CD4-positive, alpha-beta T cell (primary cell): ENCODE measurements at regions of chr2 and their contacts with region 1.

Region 1: GRCh38 chr2:30266051-30266621 is 34.8 kb downstream of the LBH start:
- DNase-seq: peak; percentile 53 to 84 (median 70)
- ATAC-seq: peak; percentile 92
- H3K4me3 ChIP-seq: peak overlapping the region; percentile 36
- H3K4me3 Mint-ChIP-seq: peak overlapping the region; percentile 88
- H3K27ac ChIP-seq: peak overlapping the region; percentile 65 to 91
- H3K27ac Mint-ChIP-seq: peak overlapping the region; percentile 95
- H3K4me1 ChIP-seq: peaks cover 59% of the 10 kb centered on the region
- H3K4me1 Mint-ChIP-seq: peaks cover 87% of the 10 kb centered on the region
- H3K27me3 ChIP-seq: no peaks in the 10 kb centered on the region
- H3K27me3 Mint-ChIP-seq: no peaks in the 10 kb centered on the region
- CTCF ChIP-seq: no peak

Region 2: DNA sequence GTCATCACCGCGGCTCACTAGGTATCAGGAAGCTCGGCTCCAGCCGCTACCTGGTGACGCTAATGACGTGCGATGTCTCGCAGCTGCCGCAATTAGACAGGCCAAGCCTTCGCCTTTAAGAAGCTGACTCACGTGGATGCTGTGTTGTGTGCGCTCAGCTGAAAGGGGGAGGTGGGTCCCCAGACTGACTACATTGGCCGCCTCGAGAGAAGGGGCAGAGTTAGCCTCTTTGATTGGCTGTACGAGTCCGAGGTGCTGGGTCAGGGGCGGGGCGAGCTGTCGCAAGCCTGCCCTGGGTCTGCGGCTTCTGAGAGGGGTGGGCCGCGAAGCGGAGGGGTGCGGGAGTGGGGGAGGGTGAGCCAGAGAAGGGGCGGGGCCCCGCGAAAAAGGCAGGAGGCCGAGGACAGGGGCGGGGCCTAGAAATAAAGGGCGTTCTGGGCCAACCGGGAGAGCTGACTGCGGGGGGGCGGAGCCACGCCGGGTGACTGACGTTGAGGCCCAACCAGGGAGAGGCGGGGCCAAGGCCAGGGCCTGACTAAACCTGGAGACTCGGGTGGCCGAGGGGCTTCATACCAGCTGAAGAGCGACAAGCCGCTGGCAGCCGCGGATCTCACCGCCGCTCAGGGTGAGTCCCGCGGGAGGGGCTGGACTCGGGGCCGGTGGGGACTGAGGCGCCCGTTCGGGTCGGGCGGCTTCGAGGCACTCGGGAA is 119.5 kb before region 1 on chr2 and contains the start of gene YPEL5:
- CTCF ChIA-PET with region 1: interaction called, 6 read pairs
- POLR2A ChIA-PET with region 1: interaction called, 18 read pairs
- intact Hi-C with region 1: no loop called
- DNase-seq: peak; percentile 99 to 100 (median 99)
- ATAC-seq: peak; percentile 82
- H3K4me3 ChIP-seq: peak within 1 kb of the TSS; percentile 71
- H3K4me3 Mint-ChIP-seq: peak within 1 kb of the TSS; percentile 94
- H3K27ac ChIP-seq: peak within 1 kb of the TSS; percentile 97 to 100
- H3K27ac Mint-ChIP-seq: peak within 1 kb of the TSS; percentile 99
- H3K4me1 ChIP-seq: peaks cover 38% of the 10 kb centered on the region
- H3K4me1 Mint-ChIP-seq: peaks cover 68% of the 10 kb centered on the region
- H3K27me3 ChIP-seq: no peaks in the 10 kb centered on the region
- H3K27me3 Mint-ChIP-seq: no peaks in the 10 kb centered on the region
- CTCF ChIP-seq: no peak
- total RNA-seq, gene YPEL5: 932 to 972 TPM

Region 3: GRCh38 chr2:30231212-30231995 is 34.7 kb before region 1 on chr2 and contains the start of gene LBH:
- CTCF ChIA-PET with region 1: interaction called, 10 read pairs
- POLR2A ChIA-PET with region 1: interaction called, 373 read pairs
- intact Hi-C with region 1: loop called (anchors 2 to 5 kb)
- DNase-seq: peak; percentile 86 to 96 (median 90)
- ATAC-seq: peak; percentile 57
- H3K4me3 ChIP-seq: peak within 1 kb of the TSS; percentile 87
- H3K4me3 Mint-ChIP-seq: peak within 1 kb of the TSS; percentile 93
- H3K27ac ChIP-seq: peak within 1 kb of the TSS; percentile 90 to 96
- H3K27ac Mint-ChIP-seq: peak within 1 kb of the TSS; percentile 99
- H3K4me1 ChIP-seq: peaks cover 58% of the 10 kb centered on the region
- H3K4me1 Mint-ChIP-seq: peaks cover 72% of the 10 kb centered on the region
- H3K27me3 ChIP-seq: no peaks in the 10 kb centered on the region
- H3K27me3 Mint-ChIP-seq: no peaks in the 10 kb centered on the region
- CTCF ChIP-seq: no peak
- total RNA-seq, gene LBH: 131 to 135 TPM

Region 4: GRCh38 chr2:30252723-30253701 is 13.1 kb before region 1 on chr2:
- CTCF ChIA-PET with region 1: interaction called, 5 read pairs
- POLR2A ChIA-PET with region 1: interaction called, 34 read pairs
- intact Hi-C with region 1: loop called in 1 of 2 experiments (anchors 1 kb)
- DNase-seq: peak in 7 of 14 experiments; percentile 33 to 63 (median 45)
- ATAC-seq: peak; percentile 37
- H3K4me3 ChIP-seq: no peak overlapping the region
- H3K4me3 Mint-ChIP-seq: peak overlapping the region; percentile 57
- H3K27ac ChIP-seq: peak overlapping the region; percentile 70 to 79
- H3K27ac Mint-ChIP-seq: peak overlapping the region; percentile 99
- H3K4me1 ChIP-seq: peaks cover 98% of the 10 kb centered on the region
- H3K4me1 Mint-ChIP-seq: peaks cover 94% of the 10 kb centered on the region
- H3K27me3 ChIP-seq: no peaks in the 10 kb centered on the region
- H3K27me3 Mint-ChIP-seq: no peaks in the 10 kb centered on the region
- CTCF ChIP-seq: no peak

Region 5: GRCh38 chr2:30315391-30316063 is 49.4 kb after region 1 on chr2:
- CTCF ChIA-PET with region 1: no interaction called
- POLR2A ChIA-PET with region 1: interaction called, 4 read pairs
- intact Hi-C with region 1: loop called in 1 of 2 experiments (anchors 5 kb)
- DNase-seq: peak in 5 of 14 experiments; percentile 27 to 82 (median 53)
- ATAC-seq: peak; percentile 80
- H3K4me3 ChIP-seq: no peak overlapping the region
- H3K4me3 Mint-ChIP-seq: peak overlapping the region; percentile 62
- H3K27ac ChIP-seq: peak overlapping the region; percentile 13 to 51
- H3K27ac Mint-ChIP-seq: peak overlapping the region; percentile 77
- H3K4me1 ChIP-seq: peaks cover 26% of the 10 kb centered on the region
- H3K4me1 Mint-ChIP-seq: peaks cover 56% of the 10 kb centered on the region
- H3K27me3 ChIP-seq: no peaks in the 10 kb centered on the region
- H3K27me3 Mint-ChIP-seq: no peaks in the 10 kb centered on the region
- CTCF ChIP-seq: no peak

Region 6: GRCh38 chr2:30421604-30422443 is 155.7 kb after region 1 on chr2:
- CTCF ChIA-PET with region 1: no interaction called
- POLR2A ChIA-PET with region 1: interaction called, 7 read pairs
- intact Hi-C with region 1: loop called in 1 of 2 experiments (anchors 10 kb)
- DNase-seq: peak in 8 of 14 experiments; percentile 10 to 63 (median 19)
- ATAC-seq: peak; percentile 47
- H3K4me3 ChIP-seq: no peak overlapping the region
- H3K4me3 Mint-ChIP-seq: peak overlapping the region; percentile 43
- H3K27ac ChIP-seq: peak overlapping the region; percentile 48 to 51
- H3K27ac Mint-ChIP-seq: peak overlapping the region; percentile 82
- H3K4me1 ChIP-seq: peaks cover 30% of the 10 kb centered on the region
- H3K4me1 Mint-ChIP-seq: peaks cover 42% of the 10 kb centered on the region
- H3K27me3 ChIP-seq: no peaks in the 10 kb centered on the region
- H3K27me3 Mint-ChIP-seq: no peaks in the 10 kb centered on the region
- CTCF ChIP-seq: no peak